Posterior vena cava (tissue), 2 donors: ENCODE measurements at regions of chr17 and their contacts with region 1.

Region 1: DNA sequence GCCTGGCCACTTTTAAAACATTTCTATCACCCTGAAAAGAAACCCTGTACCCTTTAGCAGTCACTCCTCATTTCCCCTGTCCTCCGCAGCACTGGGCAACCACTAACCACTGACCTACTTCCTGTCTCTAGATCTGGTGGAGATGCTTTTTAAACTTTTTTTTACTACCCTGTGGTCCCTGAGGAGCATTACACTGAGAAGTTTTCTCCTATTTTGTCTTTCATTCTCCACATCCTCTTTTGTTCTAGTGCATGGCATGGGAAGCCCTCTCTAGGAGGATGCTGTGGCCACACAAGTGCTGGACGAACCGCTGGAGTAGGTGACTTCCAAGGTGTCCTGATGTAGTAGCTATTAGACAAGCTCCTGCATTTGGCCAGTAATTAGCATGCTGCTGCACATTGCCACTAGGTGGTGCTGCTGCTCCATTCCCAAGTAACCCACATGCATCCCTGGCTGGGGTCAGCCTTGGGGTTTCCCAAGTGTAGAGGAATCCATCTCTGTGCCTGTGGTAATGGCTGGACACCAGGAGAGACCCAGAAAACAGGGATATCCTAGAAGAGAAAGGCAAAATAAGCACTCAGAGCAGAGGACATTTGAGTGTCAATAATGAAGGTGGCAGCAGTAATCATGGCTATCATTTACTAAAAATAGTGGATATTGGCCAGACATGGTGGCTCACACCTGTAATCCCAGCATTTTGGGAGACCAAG is 143.8 kb upstream of the CRHR1 start:
- DNase-seq: peak; percentile 87

Region 2: GRCh38 chr17:45834471-45835396 is 194.4 kb after region 1 on chr17:
- intact Hi-C with region 1: loop called (anchors 2 to 5 kb)
- DNase-seq: no peak